Activated naive CD4-positive, alpha-beta T cell treated with anti-CD3 and anti-CD28 coated beads for 36 hours (primary cell): ENCODE measurements at regions of chr2 and their contacts with region 1.

Region 1: GRCh38 chr2:202104278-202104870 is 31.3 kb downstream of the KIAA2012 start:
- DNase-seq: peak; percentile 75
- H3K4me3 Mint-ChIP-seq: no peak overlapping the region
- H3K27ac Mint-ChIP-seq: no peak overlapping the region
- H3K4me1 Mint-ChIP-seq: no peaks in the 10 kb centered on the region
- H3K27me3 Mint-ChIP-seq: no peaks in the 10 kb centered on the region

Region 2: GRCh38 chr2:201754717-201755415 is 349.5 kb before region 1 on chr2:
- CTCF ChIA-PET with region 1: no interaction called
- intact Hi-C with region 1: no loop called
- DNase-seq: no peak
- H3K4me3 Mint-ChIP-seq: no peak overlapping the region
- H3K27ac Mint-ChIP-seq: no peak overlapping the region
- H3K4me1 Mint-ChIP-seq: no peaks in the 10 kb centered on the region
- H3K27me3 Mint-ChIP-seq: no peaks in the 10 kb centered on the region

Region 3: DNA sequence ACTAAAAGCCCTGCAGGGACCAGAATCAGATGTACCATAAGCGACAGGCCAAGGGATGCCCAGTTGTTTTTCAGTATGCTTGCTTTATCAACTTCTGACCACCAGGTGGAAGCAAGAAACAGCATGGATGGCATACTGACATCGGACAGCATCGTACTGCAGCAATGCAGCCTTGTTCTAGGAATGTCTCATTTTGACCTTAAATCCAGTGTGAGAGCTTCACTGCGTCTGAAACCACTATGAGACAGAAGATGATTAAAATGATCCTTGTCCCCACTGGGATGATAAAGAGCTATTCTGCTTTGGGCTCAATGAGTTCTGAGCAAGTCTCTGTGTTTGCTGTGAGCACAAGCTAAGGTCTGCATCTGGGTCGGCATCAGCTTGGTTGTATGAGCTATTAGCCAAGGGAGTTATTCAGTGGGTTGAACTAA is 243.7 kb before region 1 on chr2:
- CTCF ChIA-PET with region 1: interaction called, 3 read pairs
- intact Hi-C with region 1: loop called (anchors 5 kb)
- DNase-seq: peak; percentile 63
- H3K4me3 Mint-ChIP-seq: no peak overlapping the region
- H3K27ac Mint-ChIP-seq: no peak overlapping the region
- H3K4me1 Mint-ChIP-seq: peaks cover 17% of the 10 kb centered on the region
- H3K27me3 Mint-ChIP-seq: peaks cover 10% of the 10 kb centered on the region

Region 4: GRCh38 chr2:202169832-202170424 is 65.6 kb after region 1 on chr2:
- CTCF ChIA-PET with region 1: interaction called, 4 read pairs
- intact Hi-C with region 1: loop called (anchors 2 kb)
- DNase-seq: no peak
- H3K4me3 Mint-ChIP-seq: no peak overlapping the region
- H3K27ac Mint-ChIP-seq: no peak overlapping the region
- H3K4me1 Mint-ChIP-seq: peaks cover 20% of the 10 kb centered on the region
- H3K27me3 Mint-ChIP-seq: peaks cover 10% of the 10 kb centered on the region

Region 5: GRCh38 chr2:202494300-202495229 is 390.2 kb after region 1 on chr2:
- CTCF ChIA-PET with region 1: no interaction called
- intact Hi-C with region 1: no loop called
- DNase-seq: no peak
- H3K4me3 Mint-ChIP-seq: no peak overlapping the region
- H3K27ac Mint-ChIP-seq: no peak overlapping the region
- H3K4me1 Mint-ChIP-seq: no peaks in the 10 kb centered on the region
- H3K27me3 Mint-ChIP-seq: no peaks in the 10 kb centered on the region